PC-3 (cell line): ENCODE measurements at regions of chr2 and their contacts with region 1.

Region 1: DNA sequence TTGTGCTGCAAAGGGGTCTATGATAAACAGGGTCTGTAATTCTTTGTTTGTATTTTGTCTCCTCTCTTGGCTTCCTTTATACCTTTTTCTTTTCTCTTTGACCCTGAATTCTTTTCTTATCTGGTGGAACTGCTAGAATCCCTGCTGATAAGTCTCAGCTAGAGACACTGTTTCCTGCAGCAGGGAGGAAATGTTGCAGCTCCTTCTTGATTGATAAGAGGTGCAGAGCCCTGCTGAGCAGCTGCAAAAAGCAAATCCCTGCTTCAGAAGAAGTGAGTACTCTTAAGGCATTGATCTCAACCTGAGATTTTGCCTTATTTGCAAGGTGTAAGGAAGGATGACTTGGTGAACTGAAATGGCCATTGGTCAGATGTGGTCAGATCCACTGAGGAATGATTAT is 167.8 kb downstream of the NUP35 start:
- DNase-seq: no peak
- ATAC-seq: no peak
- H3K4me3 ChIP-seq: no peak overlapping the region
- H3K27ac ChIP-seq: no peak overlapping the region
- H3K4me1 ChIP-seq: peaks cover 3% of the 10 kb centered on the region; the same call in 1 of the 2 replicates
- H3K27me3 ChIP-seq: no peaks in the 10 kb centered on the region
- CTCF ChIP-seq: no peak

Region 2: GRCh38 chr2:183359867-183360266 is 67.8 kb after region 1 on chr2:
- CTCF ChIA-PET with region 1: no interaction called
- POLR2A ChIA-PET with region 1: no interaction called
- intact Hi-C with region 1: loop called (anchors 1 kb)
- DNase-seq: peak; percentile 33
- ATAC-seq: no peak
- H3K4me3 ChIP-seq: no peak overlapping the region
- H3K27ac ChIP-seq: no peak overlapping the region
- H3K4me1 ChIP-seq: no peaks in the 10 kb centered on the region
- H3K27me3 ChIP-seq: no peaks in the 10 kb centered on the region
- CTCF ChIP-seq: peak; percentile 53

Region 3: DNA sequence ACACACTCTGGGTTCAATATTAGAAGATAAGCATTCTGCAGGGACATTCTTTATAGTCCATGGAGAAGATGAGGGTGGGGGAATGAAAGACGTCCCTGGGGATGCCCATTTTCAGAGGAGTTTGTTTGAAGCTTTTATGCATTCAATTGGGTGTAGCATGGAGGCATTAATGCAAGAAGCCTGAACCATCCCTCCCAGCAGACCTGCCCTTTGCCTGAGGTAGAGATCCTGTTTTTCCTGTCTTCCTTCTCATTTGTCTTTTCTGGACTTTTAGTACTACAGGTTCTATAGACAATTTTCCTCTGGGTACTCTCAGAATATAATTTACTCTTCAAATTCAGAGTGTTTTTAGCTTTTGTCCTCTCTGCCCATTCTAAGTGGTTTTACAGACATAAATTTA is 144.0 kb after region 1 on chr2:
- CTCF ChIA-PET with region 1: no interaction called
- POLR2A ChIA-PET with region 1: no interaction called
- intact Hi-C with region 1: no loop called
- DNase-seq: no peak
- ATAC-seq: no peak
- H3K4me3 ChIP-seq: no peak overlapping the region
- H3K27ac ChIP-seq: no peak overlapping the region
- H3K4me1 ChIP-seq: no peaks in the 10 kb centered on the region
- H3K27me3 ChIP-seq: no peaks in the 10 kb centered on the region
- CTCF ChIP-seq: no peak